MCF 10A (cell line): ENCODE measurements at regions of chr13 and their contacts with region 1.

Region 1: DNA sequence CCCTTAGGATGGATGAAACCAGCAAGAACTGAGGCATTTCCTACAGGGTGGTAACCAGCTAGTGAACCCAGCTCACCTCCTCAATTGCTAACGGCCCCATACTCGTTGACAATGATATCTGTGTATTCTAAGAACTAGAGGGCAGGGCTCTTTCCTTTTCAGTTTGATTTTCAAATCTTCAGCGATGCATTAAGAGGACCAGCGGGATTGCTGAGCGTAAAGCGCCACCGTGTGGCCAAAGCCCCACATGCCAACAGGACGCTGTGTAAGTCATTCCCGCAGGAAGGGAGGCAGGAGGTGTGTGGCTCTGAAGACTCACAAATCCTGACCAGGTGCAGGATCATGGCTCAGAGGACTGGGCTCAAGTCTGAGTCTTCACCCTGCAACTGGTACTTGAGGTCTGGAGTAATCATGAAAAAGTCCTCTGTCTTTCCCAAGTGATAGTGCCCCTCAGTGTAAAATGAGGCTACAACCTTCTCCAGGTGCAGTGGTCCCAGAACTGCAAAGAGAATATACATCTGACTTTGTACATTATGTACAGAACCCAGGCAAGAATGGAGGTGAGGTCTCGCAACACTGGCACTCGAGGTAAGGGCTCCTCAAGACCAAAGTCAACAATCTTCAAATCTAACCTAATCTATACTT is 40.9 kb downstream of the C13orf42 start:
- DNase-seq: peak; percentile 77
- H3K4me3 Mint-ChIP-seq: no peak overlapping the region
- H3K27ac Mint-ChIP-seq: no peak overlapping the region
- H3K4me1 Mint-ChIP-seq: peaks cover 9% of the 10 kb centered on the region
- H3K27me3 Mint-ChIP-seq: peaks cover 14% of the 10 kb centered on the region
- CTCF ChIP-seq: peak; percentile 94

Region 2: DNA sequence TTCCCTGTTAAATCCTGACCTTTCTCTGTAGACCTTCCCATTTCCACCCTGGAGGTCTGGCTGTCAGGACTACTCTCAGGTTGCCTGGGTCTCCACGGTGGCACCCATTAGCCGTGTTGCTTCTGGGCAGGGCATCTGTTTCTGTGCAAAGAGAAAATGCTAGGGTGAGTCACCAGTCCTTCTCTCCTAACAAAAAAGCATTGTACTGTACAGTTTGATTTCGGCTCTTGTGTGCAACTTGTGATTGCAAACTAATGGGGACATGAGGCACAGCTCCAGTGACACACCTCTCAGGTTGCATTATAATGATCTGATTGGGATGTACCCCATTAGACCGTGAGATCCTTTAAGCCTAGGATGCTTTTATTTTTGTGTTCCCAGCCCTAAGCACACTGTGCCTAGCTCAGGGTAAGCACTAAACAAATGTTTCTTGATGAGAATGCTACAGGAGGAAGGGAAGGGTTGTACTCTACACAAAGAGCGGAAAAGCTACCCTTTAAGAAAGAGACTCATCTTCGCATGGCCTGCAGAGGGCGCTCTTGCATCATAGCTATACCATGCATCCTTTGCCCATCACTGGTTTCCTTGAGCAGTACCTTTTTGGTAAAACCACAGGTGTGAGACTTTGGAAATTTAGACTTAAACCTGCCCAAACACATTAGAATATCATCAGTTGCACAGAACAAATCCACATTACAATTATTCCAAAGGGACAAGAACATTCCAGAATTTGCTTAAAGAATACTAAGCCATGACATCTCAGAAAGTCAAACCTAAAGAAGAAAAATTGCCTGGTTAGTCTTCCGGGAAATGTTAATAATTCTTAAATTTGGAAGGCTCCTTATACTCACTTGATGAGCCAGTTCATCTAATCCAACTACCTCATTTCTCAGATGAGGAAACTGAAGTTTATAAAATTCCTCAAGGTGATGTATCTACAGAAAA is 1093.5 kb before region 1 on chr13:
- CTCF ChIA-PET with region 1: interaction called, 20 read pairs
- POLR2A ChIA-PET with region 1: no interaction called
- intact Hi-C with region 1: loop called (anchors 5 kb)
- DNase-seq: peak; percentile 85
- H3K4me3 Mint-ChIP-seq: no peak overlapping the region
- H3K27ac Mint-ChIP-seq: peak overlapping the region; percentile 21
- H3K4me1 Mint-ChIP-seq: peaks cover 11% of the 10 kb centered on the region
- H3K27me3 Mint-ChIP-seq: no peaks in the 10 kb centered on the region
- CTCF ChIP-seq: peak; percentile 88

Region 3: DNA sequence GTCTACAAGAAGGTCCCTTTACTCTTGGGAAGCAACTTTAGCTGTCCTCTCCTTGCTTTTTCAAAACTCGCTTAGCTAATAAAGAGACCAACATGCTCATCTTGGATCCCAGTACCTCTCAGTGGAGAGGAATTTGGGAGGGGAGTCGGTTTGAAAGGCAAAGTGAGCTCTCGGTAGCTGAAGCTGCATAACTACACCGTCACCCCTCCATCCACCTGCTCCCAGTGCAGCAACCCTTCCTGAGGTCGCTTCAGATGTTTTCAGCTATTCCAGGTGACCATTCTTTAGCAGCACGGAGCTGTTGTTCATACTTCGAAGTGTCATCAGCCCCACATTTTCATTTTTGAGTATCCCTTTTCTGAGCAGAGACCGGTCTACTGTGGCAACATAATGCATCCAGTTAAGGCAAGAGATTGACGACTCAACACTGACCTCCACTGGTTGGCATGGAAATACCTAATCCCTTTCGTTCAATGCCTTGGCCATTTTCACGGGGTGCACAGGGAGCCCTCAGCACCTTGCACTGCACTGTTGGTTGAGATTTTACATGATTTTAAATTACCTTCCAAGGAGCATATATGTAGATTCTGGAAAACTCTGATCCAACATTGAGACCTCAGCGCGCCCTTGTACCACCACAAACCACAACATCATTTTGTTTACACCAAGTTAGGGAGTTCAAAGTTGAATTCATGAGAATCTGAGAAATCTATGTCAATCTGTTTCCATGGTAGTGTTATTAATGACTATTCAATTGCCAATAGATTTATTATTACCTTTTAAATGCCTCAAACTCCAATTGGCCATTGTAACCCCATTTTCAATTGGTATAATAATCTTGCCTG is 268.8 kb before region 1 on chr13:
- CTCF ChIA-PET with region 1: interaction called, 6 read pairs
- POLR2A ChIA-PET with region 1: no interaction called
- intact Hi-C with region 1: loop called (anchors 5 kb)
- DNase-seq: peak; percentile 82
- H3K4me3 Mint-ChIP-seq: no peak overlapping the region
- H3K27ac Mint-ChIP-seq: no peak overlapping the region
- H3K4me1 Mint-ChIP-seq: peaks cover 5% of the 10 kb centered on the region
- H3K27me3 Mint-ChIP-seq: no peaks in the 10 kb centered on the region
- CTCF ChIP-seq: peak; percentile 85

Region 4: DNA sequence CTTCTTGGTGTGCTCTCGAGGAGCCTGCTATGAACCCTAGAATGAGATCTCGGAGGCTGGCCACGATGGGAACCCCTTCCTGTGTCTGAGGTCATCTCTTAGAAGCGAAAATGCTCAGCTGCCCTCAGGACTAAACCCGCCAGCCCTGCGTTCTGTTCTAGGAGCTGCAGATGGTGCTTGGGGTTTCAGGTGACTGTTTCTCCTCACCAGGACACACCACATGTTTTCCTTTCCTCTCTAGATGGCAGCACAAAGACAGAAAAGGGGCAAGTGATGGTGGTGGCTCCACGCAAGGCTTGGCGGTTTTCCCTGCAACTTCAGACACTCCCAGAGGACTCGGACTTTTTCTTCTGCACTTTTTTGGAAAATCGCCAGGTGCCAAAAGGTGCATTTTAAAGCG is 100.4 kb before region 1 on chr13:
- CTCF ChIA-PET with region 1: interaction called, 35 read pairs
- POLR2A ChIA-PET with region 1: no interaction called
- intact Hi-C with region 1: no loop called
- DNase-seq: peak; percentile 14
- H3K4me3 Mint-ChIP-seq: no peak overlapping the region
- H3K27ac Mint-ChIP-seq: no peak overlapping the region
- H3K4me1 Mint-ChIP-seq: no peaks in the 10 kb centered on the region
- H3K27me3 Mint-ChIP-seq: no peaks in the 10 kb centered on the region
- CTCF ChIP-seq: no peak

Region 5: GRCh38 chr13:51052581-51052980 is 17.5 kb before region 1 on chr13:
- CTCF ChIA-PET with region 1: interaction called, 10 read pairs
- POLR2A ChIA-PET with region 1: interaction called, 6 read pairs
- intact Hi-C with region 1: no loop called
- DNase-seq: no peak
- H3K4me3 Mint-ChIP-seq: no peak overlapping the region
- H3K27ac Mint-ChIP-seq: no peak overlapping the region
- H3K4me1 Mint-ChIP-seq: no peaks in the 10 kb centered on the region
- H3K27me3 Mint-ChIP-seq: peaks cover 28% of the 10 kb centered on the region
- CTCF ChIP-seq: no peak